WTC11 (cell line): ENCODE measurements at regions of chr16 and their contacts with region 1.

Region 1: DNA sequence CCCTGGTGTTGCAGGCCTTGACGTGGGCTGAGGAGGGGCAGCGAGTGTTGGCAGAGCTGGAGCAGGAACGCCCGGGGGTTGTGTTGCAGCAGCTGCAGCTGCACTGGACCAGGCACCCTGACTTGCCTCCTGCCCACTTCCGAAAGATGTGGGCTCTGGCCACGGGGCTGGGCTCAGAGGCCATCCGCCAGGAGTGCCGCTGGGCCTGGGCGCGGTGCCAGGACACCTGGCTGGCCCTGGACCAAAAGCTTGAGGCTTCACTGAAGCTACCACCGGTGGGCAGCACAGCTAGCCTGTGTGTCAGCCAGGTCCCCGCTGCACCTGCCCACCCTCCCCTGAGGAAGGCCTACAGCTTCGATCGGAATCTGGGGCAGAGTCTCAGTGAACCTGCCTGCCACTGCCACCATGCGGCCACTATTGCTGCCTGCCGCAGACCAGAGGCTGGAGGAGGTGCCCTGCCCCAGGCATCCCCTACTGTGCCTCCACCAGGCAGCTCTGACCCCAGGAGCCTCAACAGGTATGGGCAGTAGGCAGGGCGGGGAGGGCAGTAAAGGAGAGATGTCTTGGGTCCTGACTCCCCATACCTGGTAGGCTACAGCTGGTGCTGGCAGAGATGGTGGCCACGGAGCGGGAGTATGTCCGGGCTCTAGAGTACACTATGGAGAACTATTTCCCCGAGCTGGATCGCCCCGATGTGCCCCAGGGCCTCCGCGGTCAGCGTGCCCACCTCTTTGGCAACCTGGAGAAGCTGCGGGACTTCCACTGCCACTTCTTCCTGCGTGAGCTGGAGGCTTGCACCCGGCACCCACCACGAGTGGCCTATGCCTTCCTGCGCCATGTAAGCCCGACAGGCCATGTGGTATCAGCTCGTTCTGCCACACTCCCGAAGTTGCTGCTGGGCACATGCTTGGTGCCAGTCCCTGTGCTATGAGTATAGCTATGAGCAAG is 5.6 kb downstream of the PLEKHG4 start:
- DNase-seq: peak; percentile 84
- ATAC-seq: peak; percentile 94
- H3K4me3 Mint-ChIP-seq: no peak overlapping the region
- H3K27ac Mint-ChIP-seq: no peak overlapping the region
- H3K4me1 Mint-ChIP-seq: no peaks in the 10 kb centered on the region
- H3K27me3 Mint-ChIP-seq: peaks cover 9% of the 10 kb centered on the region
- CTCF ChIP-seq: peak; percentile 58

Region 2: DNA sequence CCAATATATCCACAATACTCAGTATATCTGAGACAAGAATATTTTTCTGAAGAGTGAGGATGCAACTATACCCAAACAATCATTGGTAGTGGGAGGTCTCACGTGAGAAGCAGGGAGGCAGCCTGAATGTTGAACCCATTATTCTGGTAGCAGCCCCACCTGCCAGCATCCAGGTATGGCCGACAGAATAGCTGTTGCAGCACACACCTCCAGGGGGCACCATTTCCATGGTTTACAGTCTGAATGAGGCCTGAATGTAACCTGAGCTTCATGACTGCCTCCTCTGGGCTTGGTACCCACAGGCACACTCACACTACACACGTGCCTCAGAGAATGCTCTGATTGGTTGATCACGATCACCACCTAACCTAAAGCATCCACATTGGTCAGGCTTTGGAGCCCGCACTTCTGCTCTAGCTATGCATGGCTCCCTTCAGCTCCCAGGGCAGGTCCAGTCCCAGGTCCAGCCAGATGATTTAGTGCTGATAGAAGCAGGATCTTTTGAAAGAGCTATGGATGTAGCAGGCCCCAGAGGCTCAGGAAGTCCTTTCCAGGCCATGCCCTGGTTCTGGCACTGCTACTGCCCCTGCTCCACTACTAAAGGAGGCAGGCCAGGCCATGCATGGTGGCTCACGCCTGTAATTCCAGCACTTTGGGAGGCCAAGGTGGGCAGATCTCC is 267.0 kb before region 1 on chr16:
- CTCF ChIA-PET with region 1: interaction called, 10 read pairs
- POLR2A ChIA-PET with region 1: no interaction called
- DNase-seq: peak; percentile 95
- ATAC-seq: peak; percentile 96
- H3K4me3 Mint-ChIP-seq: no peak overlapping the region
- H3K27ac Mint-ChIP-seq: no peak overlapping the region
- H3K4me1 Mint-ChIP-seq: no peaks in the 10 kb centered on the region
- H3K27me3 Mint-ChIP-seq: peaks cover 41% of the 10 kb centered on the region
- CTCF ChIP-seq: peak; percentile 85

Region 3: GRCh38 chr16:67246934-67247697 is 37.9 kb before region 1 on chr16 and contains the start of gene FHOD1:
- CTCF ChIA-PET with region 1: interaction called, 57 read pairs
- POLR2A ChIA-PET with region 1: interaction called, 4 read pairs
- DNase-seq: peak; percentile 99
- ATAC-seq: peak; percentile 61
- H3K4me3 Mint-ChIP-seq: peak within 1 kb of the TSS; percentile 89
- H3K27ac Mint-ChIP-seq: peak within 1 kb of the TSS; percentile 85
- H3K4me1 Mint-ChIP-seq: peaks cover 34% of the 10 kb centered on the region
- H3K27me3 Mint-ChIP-seq: peaks cover 40% of the 10 kb centered on the region
- CTCF ChIP-seq: no peak
- total RNA-seq, gene FHOD1: 68.9 to 81.3 TPM (median 71.5 TPM) in 3 replicates

Region 4: DNA sequence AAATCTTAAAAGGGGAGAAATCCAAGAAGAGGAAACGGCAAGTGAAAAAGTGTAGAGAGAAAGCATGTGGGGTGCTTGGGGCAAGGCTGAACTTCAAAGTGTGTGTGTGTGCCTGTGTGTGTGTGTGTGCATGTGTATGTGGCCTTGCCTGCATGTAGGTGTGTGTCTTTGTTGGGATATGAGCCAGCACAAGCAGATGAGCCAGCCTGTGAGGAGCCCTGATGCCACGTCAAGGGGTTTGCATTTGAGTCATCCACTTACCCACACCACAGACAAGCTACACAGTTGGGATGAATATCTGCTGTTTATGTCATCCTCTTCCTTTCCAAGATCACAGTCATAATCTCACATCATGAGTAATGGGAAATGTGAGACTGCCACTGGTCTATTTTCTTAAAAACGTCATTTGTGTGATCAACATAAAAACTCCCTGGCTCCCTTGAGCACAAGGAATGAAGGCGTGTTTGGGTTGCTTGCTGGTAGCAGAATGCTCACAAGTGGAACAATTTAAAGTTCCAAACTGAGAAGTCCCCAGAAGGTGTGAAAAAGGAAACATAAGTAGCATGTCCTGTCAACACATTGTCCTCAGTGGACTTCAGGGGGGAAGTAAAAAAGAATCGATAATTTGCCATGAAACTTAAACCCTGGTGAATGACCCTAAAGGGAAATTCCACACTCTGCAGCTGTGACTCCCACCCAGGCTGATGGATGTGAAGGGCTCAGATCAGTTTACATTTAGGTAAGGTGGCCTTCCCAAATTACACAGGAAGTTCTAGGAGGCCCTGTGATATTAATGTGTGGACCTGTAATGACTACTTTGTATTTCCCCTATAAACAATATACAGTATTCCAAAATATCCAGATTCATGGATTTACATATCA is 26.9 kb after region 1 on chr16:
- CTCF ChIA-PET with region 1: interaction called, 11 read pairs
- POLR2A ChIA-PET with region 1: no interaction called
- DNase-seq: no peak
- ATAC-seq: no peak
- H3K4me3 Mint-ChIP-seq: no peak overlapping the region
- H3K27ac Mint-ChIP-seq: no peak overlapping the region
- H3K4me1 Mint-ChIP-seq: no peaks in the 10 kb centered on the region
- H3K27me3 Mint-ChIP-seq: peaks cover 5% of the 10 kb centered on the region; the same call in 1 of the 2 replicates
- CTCF ChIP-seq: no peak

Region 5: DNA sequence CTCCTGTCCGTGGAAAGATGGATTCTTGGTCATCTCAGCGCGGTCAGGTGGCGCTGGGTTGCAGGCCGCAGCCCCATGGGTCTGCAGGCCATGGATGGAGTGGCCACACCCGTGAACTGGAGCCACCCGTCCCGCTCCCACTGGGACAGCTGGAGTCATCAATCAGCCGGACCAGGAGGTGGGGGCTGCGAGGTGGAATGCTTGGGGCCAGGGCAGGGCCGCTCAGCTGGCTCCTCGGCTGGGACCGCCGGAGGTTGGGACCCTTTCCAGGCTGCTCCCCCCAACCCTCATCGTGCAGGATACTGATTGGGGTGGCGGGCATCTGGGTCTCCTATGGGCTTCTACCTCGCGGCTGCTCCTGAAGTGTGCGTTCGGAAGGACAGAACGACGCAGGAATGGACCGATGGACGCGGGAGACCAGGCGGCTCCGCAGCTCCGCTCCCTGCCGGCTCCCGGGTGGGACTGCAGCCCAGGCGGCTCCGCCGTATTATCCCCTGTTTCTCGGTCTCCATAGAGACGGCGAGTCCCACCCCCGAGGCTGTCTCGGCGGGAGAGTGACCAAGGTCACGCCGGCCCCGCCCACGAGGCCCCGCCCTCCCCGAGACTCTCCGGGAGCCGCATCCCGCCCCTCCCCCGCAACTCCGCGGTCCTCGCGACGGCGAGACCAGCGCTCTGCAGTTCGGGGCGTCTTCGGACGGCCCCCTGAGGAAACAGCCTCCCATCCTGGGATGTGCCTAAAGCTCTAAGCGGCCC is 108.2 kb after region 1 on chr16 and contains the start of gene TPPP3:
- CTCF ChIA-PET with region 1: interaction called, 19 read pairs
- POLR2A ChIA-PET with region 1: no interaction called
- DNase-seq: peak; percentile 90
- ATAC-seq: peak; percentile 56
- H3K4me3 Mint-ChIP-seq: peak within 1 kb of the TSS; percentile 66
- H3K27ac Mint-ChIP-seq: no peak within 1 kb of the TSS
- H3K4me1 Mint-ChIP-seq: peaks cover 20% of the 10 kb centered on the region
- H3K27me3 Mint-ChIP-seq: peaks cover 56% of the 10 kb centered on the region
- CTCF ChIP-seq: peak; percentile 25; the same call in 1 of the 2 replicates
- total RNA-seq, gene TPPP3: 0.57 to 0.74 TPM (median 0.64 TPM) in 3 replicates

Region 6: GRCh38 chr16:67447508-67448076 is 162.6 kb after region 1 on chr16:
- CTCF ChIA-PET with region 1: interaction called, 21 read pairs
- POLR2A ChIA-PET with region 1: interaction called, 6 read pairs
- DNase-seq: peak; percentile 62
- ATAC-seq: no peak; the same call in 1 of the 2 replicates
- H3K4me3 Mint-ChIP-seq: no peak overlapping the region
- H3K27ac Mint-ChIP-seq: no peak overlapping the region
- H3K4me1 Mint-ChIP-seq: peaks cover 6% of the 10 kb centered on the region
- H3K27me3 Mint-ChIP-seq: no peaks in the 10 kb centered on the region; the same call in 1 of the 2 replicates
- CTCF ChIP-seq: 0 out of 2 replicates have a peak, but pooled peaks have one; percentile 16